ENCODE measurements at regions of chrX and their contacts with region 1.

Region 1: GRCh38 chrX:77899081-77899828 is at the start of gene COX7B:
- DNase-seq: peak; percentile 17 to 93 (median 87)
- ATAC-seq: peak; percentile 77
- H3K4me3 ChIP-seq: peak within 1 kb of the TSS; percentile 75
- H3K4me3 Mint-ChIP-seq: peak within 1 kb of the TSS; percentile 87 to 98 (median 92)
- H3K27ac ChIP-seq: peak within 1 kb of the TSS; percentile 89
- H3K27ac Mint-ChIP-seq: peak within 1 kb of the TSS; percentile 91 to 97 (median 96)
- H3K4me1 ChIP-seq: peaks cover 6 to 8% of the 10 kb centered on the region in 2 donors
- H3K4me1 Mint-ChIP-seq: peaks cover 4 to 31% (median 22%) of the 10 kb centered on the region in 7 donors
- H3K27me3 ChIP-seq: no peaks in the 10 kb centered on the region
- H3K27me3 Mint-ChIP-seq: no peaks in the 10 kb centered on the region
- total RNA-seq, gene COX7B: 98.9 to 261 (median 103) TPM

Region 2: GRCh38 chrX:76279000-76279399 is 1620.3 kb before region 1 on chrX:
- CTCF ChIA-PET with region 1: no interaction called
- POLR2A ChIA-PET with region 1: no interaction called
- intact Hi-C with region 1: loop called in 1 of 2 experiments (anchors 5 kb)
- DNase-seq: peak; percentile 6 to 46 (median 19)
- ATAC-seq: no peak
- H3K4me3 ChIP-seq: no peak overlapping the region
- H3K4me3 Mint-ChIP-seq: no peak overlapping the region
- H3K27ac ChIP-seq: no peak overlapping the region
- H3K27ac Mint-ChIP-seq: no peak overlapping the region
- H3K4me1 ChIP-seq: no peaks in the 10 kb centered on the region
- H3K4me1 Mint-ChIP-seq: no peaks in the 10 kb centered on the region
- H3K27me3 ChIP-seq: no peaks in the 10 kb centered on the region
- H3K27me3 Mint-ChIP-seq: no peaks in the 10 kb centered on the region

Region 3: DNA sequence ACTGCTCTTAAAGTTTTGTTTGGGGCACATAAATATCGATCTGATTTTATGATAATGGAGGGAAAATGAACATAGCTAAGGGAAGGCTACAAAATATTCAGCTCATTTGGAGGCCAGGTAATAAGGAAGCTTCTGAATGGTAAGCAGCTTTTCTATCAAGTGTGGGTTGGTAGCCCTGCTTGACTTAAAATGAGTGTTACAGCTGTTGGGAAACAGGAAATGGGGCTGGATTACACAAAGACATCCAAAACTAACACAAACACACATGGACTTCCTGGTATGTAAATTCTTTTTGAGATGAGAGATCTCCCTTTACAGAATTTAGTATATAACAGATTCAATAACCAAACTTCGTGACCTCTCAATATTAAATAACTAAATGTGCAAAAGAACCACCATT is 394.0 kb before region 1 on chrX:
- CTCF ChIA-PET with region 1: no interaction called
- POLR2A ChIA-PET with region 1: no interaction called
- intact Hi-C with region 1: loop called in 1 of 2 experiments (anchors 10 kb)
- DNase-seq: no peak
- ATAC-seq: no peak
- H3K4me3 ChIP-seq: no peak overlapping the region
- H3K4me3 Mint-ChIP-seq: no peak overlapping the region
- H3K27ac ChIP-seq: no peak overlapping the region
- H3K27ac Mint-ChIP-seq: peak overlapping the region in 8 of 9 donors; percentile 8 to 74 (median 52)
- H3K4me1 ChIP-seq: no peaks in the 10 kb centered on the region
- H3K4me1 Mint-ChIP-seq: peaks cover 0 to 20% (median 5%) of the 10 kb centered on the region in 7 donors
- H3K27me3 ChIP-seq: no peaks in the 10 kb centered on the region
- H3K27me3 Mint-ChIP-seq: no peaks in the 10 kb centered on the region

Region 4: DNA sequence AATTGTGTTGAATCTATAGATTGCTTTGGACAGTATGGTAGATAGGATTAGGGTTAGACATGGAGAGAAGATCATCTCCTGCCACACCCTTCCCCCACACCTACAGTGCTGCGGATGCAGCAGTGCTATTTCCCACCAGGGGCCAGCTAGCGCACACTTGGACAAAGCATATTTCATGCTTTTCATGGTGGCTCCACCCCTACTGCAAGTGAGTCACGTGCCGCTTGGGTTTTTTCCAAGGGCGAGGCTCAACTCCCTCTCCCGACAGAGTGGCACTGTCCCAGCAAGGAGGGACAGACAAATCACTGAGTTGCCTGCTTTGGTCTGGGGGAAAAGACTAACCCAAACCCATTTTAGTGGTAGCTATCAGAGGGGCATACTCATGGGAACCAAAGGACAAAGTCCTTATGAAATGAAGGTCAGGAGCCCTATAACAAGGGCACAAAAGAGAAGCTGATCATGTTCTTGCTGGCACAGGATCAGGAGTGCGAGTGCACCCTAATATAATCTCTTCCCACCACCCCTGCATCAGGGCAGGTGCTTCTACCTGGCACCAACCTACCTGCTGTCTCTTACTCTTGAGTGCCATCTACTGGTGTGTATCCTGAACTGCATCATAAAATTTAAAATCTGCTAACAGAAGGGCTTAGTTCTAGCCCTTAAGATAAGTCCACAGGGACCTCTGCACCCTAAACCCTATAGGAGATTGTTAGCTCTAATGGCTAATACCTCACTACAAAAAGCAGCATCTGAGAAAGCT is 125.3 kb after region 1 on chrX:
- CTCF ChIA-PET with region 1: interaction called, 8 read pairs
- POLR2A ChIA-PET with region 1: no interaction called
- intact Hi-C with region 1: loop called in 1 of 2 experiments (anchors 5 kb)
- DNase-seq: peak in 7 of 9 donors; percentile 16 to 63 (median 59)
- ATAC-seq: peak; percentile 87
- H3K4me3 ChIP-seq: no peak overlapping the region
- H3K4me3 Mint-ChIP-seq: no peak overlapping the region
- H3K27ac ChIP-seq: no peak overlapping the region
- H3K27ac Mint-ChIP-seq: peak overlapping the region in 4 of 9 donors; percentile 5 to 42 (median 28)
- H3K4me1 ChIP-seq: no peaks in the 10 kb centered on the region
- H3K4me1 Mint-ChIP-seq: peaks cover 0 to 6% (median 5%) of the 10 kb centered on the region in 7 donors
- H3K27me3 ChIP-seq: no peaks in the 10 kb centered on the region
- H3K27me3 Mint-ChIP-seq: no peaks in the 10 kb centered on the region

Region 5: DNA sequence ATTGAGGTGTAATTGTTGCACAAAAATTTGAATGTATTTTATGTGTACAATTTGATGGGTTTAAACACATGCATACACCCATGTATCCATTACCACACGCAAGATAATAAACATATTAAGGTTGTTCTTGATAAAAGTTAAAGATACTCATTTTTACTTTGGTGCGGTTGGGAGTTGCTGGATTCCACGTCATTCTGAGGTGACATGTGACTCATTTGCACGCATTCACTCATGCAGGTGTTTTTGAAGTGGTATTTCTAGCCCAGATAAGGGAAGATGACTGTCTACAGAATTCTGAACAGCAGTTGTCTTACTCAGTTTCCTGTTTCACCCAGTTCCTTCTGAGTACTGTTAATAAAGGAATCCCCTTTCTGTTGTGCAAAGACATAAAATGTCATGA is 617.9 kb after region 1 on chrX:
- CTCF ChIA-PET with region 1: no interaction called
- POLR2A ChIA-PET with region 1: interaction called, 3 read pairs
- intact Hi-C with region 1: loop called in 1 of 2 experiments (anchors 5 kb)
- DNase-seq: peak in 8 of 9 donors; percentile 37 to 92 (median 84)
- ATAC-seq: peak; percentile 95
- H3K4me3 ChIP-seq: no peak overlapping the region
- H3K4me3 Mint-ChIP-seq: peak overlapping the region in 9 of 10 donors; percentile 16 to 73 (median 67)
- H3K27ac ChIP-seq: peak overlapping the region; percentile 72
- H3K27ac Mint-ChIP-seq: peak overlapping the region; percentile 90 to 97 (median 92)
- H3K4me1 ChIP-seq: peaks cover 16 to 25% of the 10 kb centered on the region in 2 donors
- H3K4me1 Mint-ChIP-seq: peaks cover 2 to 58% (median 39%) of the 10 kb centered on the region in 7 donors
- H3K27me3 ChIP-seq: no peaks in the 10 kb centered on the region
- H3K27me3 Mint-ChIP-seq: no peaks in the 10 kb centered on the region

Region 6: DNA sequence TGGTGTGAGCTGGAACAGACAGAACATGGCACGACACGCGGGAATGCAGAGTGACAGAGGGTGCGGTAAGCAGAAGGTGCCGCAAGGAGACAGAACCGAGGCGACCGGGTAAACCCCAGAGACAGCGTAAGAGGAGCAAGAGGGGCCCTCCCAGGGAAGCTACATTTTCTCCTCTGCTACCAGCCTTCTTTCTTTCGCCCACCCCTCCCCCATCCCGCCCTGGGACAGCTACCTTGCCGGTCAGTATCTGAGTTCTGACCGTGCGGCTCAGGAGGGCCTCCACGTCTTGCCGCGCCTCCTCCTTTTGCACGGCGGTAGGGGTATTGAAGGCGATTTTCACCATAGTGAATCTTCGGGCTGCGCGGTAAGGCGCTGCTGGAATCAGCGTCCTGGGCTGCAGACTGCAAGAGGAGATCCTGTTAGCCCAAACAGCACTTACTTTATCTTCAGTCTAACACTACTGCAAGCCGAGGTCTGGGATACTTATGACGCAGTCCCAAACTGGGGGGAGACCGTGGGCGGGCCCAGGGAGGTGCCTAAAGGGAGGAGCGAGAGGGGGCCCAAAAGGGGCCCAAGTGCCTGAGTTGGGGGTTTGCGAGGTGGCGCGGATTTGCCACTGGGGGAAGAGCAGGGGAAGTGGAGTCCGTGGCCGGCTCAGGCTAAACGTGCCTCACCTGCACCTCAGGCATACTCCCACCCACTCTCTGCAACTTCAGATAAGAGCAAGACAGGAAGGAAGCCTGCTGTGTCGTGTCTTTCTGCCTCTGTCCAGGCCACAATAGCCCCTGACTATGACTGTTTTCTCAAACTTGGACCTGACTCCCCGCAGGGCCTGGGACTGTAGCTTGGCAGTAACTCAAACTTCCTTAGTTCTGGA is 1467.9 kb after region 1 on chrX and contains the start of gene ITM2A:
- CTCF ChIA-PET with region 1: no interaction called
- POLR2A ChIA-PET with region 1: no interaction called
- intact Hi-C with region 1: loop called (anchors 5 to 10 kb)
- DNase-seq: peak; percentile 31 to 75 (median 62)
- ATAC-seq: peak; percentile 86
- H3K4me3 ChIP-seq: peak within 1 kb of the TSS; percentile 93
- H3K4me3 Mint-ChIP-seq: peak within 1 kb of the TSS; percentile 89 to 99 (median 95)
- H3K27ac ChIP-seq: peak within 1 kb of the TSS; percentile 89
- H3K27ac Mint-ChIP-seq: peak within 1 kb of the TSS; percentile 92 to 99 (median 98)
- H3K4me1 ChIP-seq: peaks cover 7 to 13% of the 10 kb centered on the region in 2 donors
- H3K4me1 Mint-ChIP-seq: peaks cover 7 to 39% (median 31%) of the 10 kb centered on the region in 7 donors
- H3K27me3 ChIP-seq: no peaks in the 10 kb centered on the region
- H3K27me3 Mint-ChIP-seq: no peaks in the 10 kb centered on the region
- total RNA-seq, gene ITM2A: 109 to 170 (median 154) TPM

Measured in naive thymus-derived CD4-positive, alpha-beta T cell (primary cell).